Panc1 (cell line): ENCODE measurements at regions of chr17 and their contacts with region 1.

Region 1: GRCh38 chr17:34637548-34638525 is 58.5 kb downstream of the TMEM132E start:
- DNase-seq: peak; percentile 25
- ATAC-seq: peak; percentile 95
- H3K4me3 ChIP-seq: no peak overlapping the region
- H3K27ac ChIP-seq: no peak overlapping the region
- H3K4me1 ChIP-seq: no peaks in the 10 kb centered on the region
- H3K27me3 ChIP-seq: peaks cover 9% of the 10 kb centered on the region; the same call in 1 of the 2 replicates
- CTCF ChIP-seq: peak; percentile 92

Region 2: DNA sequence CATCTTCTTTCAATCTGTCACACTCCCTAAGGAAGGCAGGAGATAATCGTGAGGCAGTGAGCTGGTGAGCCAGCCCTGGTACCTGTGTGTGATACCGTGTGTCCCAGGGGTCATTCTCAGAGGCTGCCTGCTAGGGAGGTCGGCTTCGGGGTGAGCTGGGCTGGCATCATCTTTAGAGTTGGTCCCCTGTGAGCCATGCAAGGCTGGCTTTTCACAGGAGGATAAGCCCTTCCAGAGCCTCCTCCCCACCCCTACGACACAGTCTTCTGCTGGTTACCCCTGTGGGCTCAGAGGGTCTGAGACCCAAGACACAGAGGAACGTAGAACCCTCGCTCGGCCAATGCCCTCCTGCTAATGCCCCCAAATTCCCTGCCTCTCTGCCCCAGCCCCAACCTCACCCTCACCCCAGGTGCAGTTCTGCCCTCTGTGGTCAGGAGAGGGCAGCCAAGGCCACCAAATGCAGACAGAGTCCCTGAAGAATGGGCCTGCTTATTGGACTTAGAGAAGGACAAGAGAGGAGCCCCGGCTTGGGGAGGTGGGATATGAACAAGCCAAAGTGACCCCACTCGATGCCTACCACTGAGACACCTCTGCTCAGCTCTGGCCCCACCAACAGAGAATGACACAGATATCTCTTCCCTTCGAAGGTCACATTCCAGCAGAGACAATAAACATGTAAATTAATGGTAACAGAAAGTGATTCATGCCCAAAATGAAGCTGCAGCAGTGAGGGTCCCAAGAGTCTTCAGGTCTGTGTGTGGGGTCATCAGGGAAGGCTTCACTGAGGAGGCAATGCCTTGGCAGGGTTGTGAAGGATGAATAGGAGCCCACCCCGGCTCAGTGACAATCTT is 194.0 kb before region 1 on chr17:
- CTCF ChIA-PET with region 1: no interaction called
- POLR2A ChIA-PET with region 1: no interaction called
- in situ Hi-C with region 1: no loop called
- intact Hi-C with region 1: loop called (anchors 10 kb)
- DNase-seq: no peak
- ATAC-seq: peak; percentile 89
- H3K4me3 ChIP-seq: no peak overlapping the region
- H3K27ac ChIP-seq: no peak overlapping the region
- H3K4me1 ChIP-seq: no peaks in the 10 kb centered on the region
- H3K27me3 ChIP-seq: peaks cover 12% of the 10 kb centered on the region; the same call in 1 of the 2 replicates
- CTCF ChIP-seq: peak; percentile 72

Region 3: GRCh38 chr17:34616148-34616547 is 21.7 kb before region 1 on chr17:
- CTCF ChIA-PET with region 1: no interaction called
- POLR2A ChIA-PET with region 1: no interaction called
- in situ Hi-C with region 1: no loop called
- intact Hi-C with region 1: no loop called
- DNase-seq: no peak
- ATAC-seq: no peak
- H3K4me3 ChIP-seq: no peak overlapping the region
- H3K27ac ChIP-seq: no peak overlapping the region
- H3K4me1 ChIP-seq: no peaks in the 10 kb centered on the region
- H3K27me3 ChIP-seq: no peaks in the 10 kb centered on the region
- CTCF ChIP-seq: no peak

Region 4: DNA sequence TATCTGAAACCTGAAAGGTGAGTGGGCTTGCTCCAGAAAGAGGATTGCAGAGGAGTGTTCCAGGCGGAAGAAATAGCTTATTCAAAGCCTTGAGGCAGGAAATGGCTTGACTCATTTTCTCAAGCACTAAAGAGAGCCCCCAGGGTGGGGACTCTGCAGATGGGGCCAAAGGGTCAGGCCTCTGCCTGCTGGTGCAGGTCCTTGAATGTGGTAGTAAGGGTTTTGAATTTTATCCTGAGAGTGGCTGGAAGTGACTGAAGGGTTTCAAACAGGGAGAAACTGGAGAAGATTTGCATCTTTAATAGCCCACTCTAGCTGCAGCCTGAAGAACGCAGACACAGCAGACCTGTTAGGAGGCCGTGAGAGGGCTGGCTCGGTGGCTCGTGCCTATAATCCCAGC is 179.0 kb after region 1 on chr17:
- CTCF ChIA-PET with region 1: no interaction called
- POLR2A ChIA-PET with region 1: no interaction called
- in situ Hi-C with region 1: no loop called
- intact Hi-C with region 1: no loop called
- DNase-seq: no peak
- ATAC-seq: no peak
- H3K4me3 ChIP-seq: no peak overlapping the region
- H3K27ac ChIP-seq: no peak overlapping the region
- H3K4me1 ChIP-seq: no peaks in the 10 kb centered on the region
- H3K27me3 ChIP-seq: no peaks in the 10 kb centered on the region
- CTCF ChIP-seq: no peak

Region 5: GRCh38 chr17:35063514-35064223 is 425.8 kb after region 1 on chr17 and contains the start of gene RFFL:
- CTCF ChIA-PET with region 1: interaction called, 13 read pairs
- POLR2A ChIA-PET with region 1: no interaction called
- in situ Hi-C with region 1: no loop called
- intact Hi-C with region 1: no loop called
- DNase-seq: peak; percentile 94
- ATAC-seq: peak; percentile 100
- H3K4me3 ChIP-seq: peak within 1 kb of the TSS; percentile 15 to 38
- H3K27ac ChIP-seq: peak within 1 kb of the TSS; percentile 94
- H3K4me1 ChIP-seq: peaks cover 25% of the 10 kb centered on the region
- H3K27me3 ChIP-seq: no peaks in the 10 kb centered on the region
- CTCF ChIP-seq: no peak; the same call in 1 of the 2 replicates
- total RNA-seq, gene RFFL: 38.4 TPM